Kidney (tissue), 22 donors: ENCODE measurements at regions of chr10 and their contacts with region 1.

Region 1: GRCh38 chr10:94320285-94320914 is 42.3 kb downstream of the NOC3L start:
- DNase-seq: peak in 4 of 5 donors; percentile 55 to 81 (median 66)
- H3K4me3 ChIP-seq: no peak overlapping the region
- H3K27ac ChIP-seq: no peak overlapping the region
- H3K4me1 ChIP-seq: no peaks in the 10 kb centered on the region
- H3K27me3 ChIP-seq: no peaks in the 10 kb centered on the region
- CTCF ChIP-seq: peak; percentile 76

Region 2: DNA sequence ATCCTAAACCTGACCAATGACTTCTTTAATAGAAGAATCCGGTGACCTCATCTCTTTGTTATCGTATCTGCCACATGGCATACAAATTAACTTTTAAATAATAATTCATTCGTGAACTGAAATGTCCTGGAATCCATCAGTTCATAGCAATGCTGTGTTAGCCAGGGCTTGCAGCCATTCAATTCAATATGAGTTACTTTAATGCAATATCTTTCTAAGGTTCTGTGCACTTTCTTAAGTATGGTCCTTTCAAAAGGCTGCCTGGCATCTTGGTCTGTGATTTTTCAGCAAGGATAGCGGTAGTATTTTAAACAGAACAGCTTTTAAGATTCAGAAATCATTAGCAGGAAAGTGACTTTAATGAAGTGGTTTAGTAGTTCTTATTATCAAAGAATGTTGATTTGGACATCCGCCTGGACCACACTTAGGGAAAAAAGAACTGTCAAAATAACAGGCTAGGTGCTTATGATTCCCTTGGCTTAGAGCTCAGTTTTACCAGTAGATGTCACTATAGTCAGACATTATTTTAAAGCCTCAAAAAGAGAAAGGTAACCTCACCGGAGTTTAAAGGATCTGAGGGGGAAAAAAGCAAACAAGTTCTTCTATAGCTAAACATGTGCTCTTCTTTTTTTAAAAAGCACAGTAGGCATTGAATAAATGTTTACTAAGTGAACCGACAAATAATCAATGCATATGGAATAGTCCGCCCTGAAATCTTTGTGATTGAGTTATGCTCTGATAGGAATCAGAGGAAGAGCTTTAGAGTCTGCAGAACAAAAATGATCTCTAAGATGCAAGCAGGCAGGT is 403.9 kb before region 1 on chr10:
- intact Hi-C with region 1: loop called (anchors 10 kb)
- DNase-seq: peak in 2 of 5 donors; percentile 80 to 84
- H3K4me3 ChIP-seq: peak overlapping the region; percentile 3 to 61 (median 50)
- H3K27ac ChIP-seq: no peak overlapping the region
- H3K4me1 ChIP-seq: peaks cover 0 to 8% (median 0%) of the 10 kb centered on the region in 3 donors
- H3K27me3 ChIP-seq: no peaks in the 10 kb centered on the region
- CTCF ChIP-seq: peak; percentile 44

Region 3: GRCh38 chr10:94362360-94363250 is 42.2 kb after region 1 on chr10 and contains the start of gene NOC3L:
- intact Hi-C with region 1: no loop called
- DNase-seq: peak; percentile 96 to 98 (median 97)
- H3K4me3 ChIP-seq: peak within 1 kb of the TSS; percentile 75 to 91 (median 90)
- H3K27ac ChIP-seq: peak within 1 kb of the TSS; percentile 26 to 58
- H3K4me1 ChIP-seq: peaks cover 0 to 7% (median 0%) of the 10 kb centered on the region in 3 donors
- H3K27me3 ChIP-seq: no peaks in the 10 kb centered on the region
- CTCF ChIP-seq: peak; percentile 79
- total RNA-seq, gene NOC3L: 17.7 TPM